ENCODE measurements at regions of chr19 and their contacts with region 1.

Region 1: DNA sequence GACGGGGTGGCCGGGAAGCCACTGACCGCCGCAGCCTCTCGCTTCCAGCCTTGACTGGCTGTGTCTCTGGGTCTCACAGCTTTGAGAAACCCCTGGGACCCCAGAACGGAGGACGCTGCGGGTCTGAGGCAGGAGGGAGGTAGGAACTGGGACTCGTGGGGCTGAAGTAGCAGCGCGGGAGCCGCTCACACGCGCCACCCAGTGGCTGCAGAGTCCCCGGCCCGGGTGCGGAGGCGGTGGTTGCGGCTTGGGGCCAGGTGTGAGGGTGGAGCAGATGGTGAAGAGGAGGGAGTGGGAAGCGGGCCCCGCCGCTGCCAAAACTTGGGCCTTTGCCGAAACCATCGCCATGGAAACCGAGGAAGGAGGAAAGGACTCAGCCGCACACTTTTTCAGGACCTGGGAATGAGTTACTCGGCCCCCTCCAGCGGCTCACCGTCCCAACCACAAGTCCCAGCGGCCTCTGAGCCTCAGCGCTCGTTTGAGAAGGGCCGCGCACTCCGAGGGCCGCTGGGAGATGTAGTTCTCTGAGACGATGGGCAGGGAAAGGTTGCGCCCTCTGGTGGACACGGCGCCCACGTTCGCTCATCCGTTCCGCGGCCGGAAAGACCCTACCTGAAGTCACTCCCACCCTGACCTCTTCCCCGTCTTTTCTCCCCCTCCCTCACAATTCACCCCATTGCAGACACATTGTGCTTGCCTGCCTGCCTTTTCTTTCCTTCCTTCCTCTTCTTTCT is 2.2 kb upstream of the SLC17A7 start:
- DNase-seq: peak; percentile 91
- H3K4me3 ChIP-seq: peak overlapping the region; percentile 62 to 66
- H3K27ac ChIP-seq: peak overlapping the region; percentile 54 to 79
- H3K4me1 ChIP-seq: peaks cover 0 to 22% of the 10 kb centered on the region in 2 experiments; a peak in 1 of 4 replicates
- H3K27me3 ChIP-seq: peaks cover 33% of the 10 kb centered on the region
- CTCF ChIP-seq: peak; percentile 91
- EP300 ChIP-seq: no peak
- RAD21 ChIP-seq: peak; percentile 66

Region 2: GRCh38 chr19:49409441-49410029 is 34.0 kb before region 1 on chr19:
- CTCF ChIA-PET with region 1: interaction called, 14 read pairs
- POLR2A ChIA-PET with region 1: no interaction called
- DNase-seq: no peak
- H3K4me3 ChIP-seq: no peak overlapping the region
- H3K27ac ChIP-seq: no peak overlapping the region
- H3K4me1 ChIP-seq: peaks cover 0 to 12% of the 10 kb centered on the region in 2 experiments; a peak in 1 of 4 replicates
- H3K27me3 ChIP-seq: no peaks in the 10 kb centered on the region
- CTCF ChIP-seq: no peak
- EP300 ChIP-seq: no peak
- RAD21 ChIP-seq: no peak

Region 3: DNA sequence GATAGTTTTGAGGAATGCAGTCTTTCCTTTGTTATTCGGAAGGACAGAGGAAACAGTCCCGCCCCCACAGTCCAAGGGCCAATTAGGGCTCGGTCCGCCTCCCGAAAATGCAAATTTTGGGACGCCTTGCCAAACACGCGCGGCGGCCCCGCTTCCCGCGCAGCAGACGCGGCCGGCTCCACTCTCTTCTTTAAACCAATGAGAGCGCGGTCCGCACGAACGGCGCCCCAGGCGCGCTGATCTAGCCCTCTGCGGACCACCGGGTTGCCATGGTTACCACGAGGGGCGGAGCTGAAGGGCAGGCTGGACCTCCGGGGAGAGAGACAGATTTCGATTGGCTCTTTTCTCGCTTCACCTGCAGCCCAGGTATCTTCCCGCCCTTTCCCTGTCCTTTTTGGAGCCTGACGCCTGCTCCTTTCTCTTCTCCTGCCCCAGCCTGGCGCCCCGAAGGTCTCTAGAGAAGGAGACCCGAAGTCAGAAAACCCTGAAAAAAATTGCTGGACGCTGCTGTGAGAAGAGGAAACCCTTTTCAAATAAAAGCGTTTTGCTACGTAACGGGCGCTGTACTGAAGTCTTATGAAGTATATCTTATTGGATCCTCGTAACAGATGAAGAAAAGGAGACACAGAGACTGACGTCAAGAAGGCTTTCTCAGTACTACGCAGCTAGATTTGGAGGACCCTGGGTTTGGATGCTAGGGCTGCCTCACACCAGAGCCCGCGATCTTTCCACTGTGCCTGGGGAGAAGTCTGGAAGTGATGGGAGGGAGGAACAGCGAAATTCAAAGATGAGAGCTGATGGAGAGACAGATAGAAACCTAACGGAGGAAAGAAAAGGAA is 22.3 kb before region 1 on chr19:
- CTCF ChIA-PET with region 1: interaction called, 11 read pairs
- POLR2A ChIA-PET with region 1: no interaction called
- DNase-seq: peak; percentile 95
- H3K4me3 ChIP-seq: peak overlapping the region in 1 of 2 experiments; percentile 14; a peak in 2 of 4 replicates
- H3K27ac ChIP-seq: no peak overlapping the region
- H3K4me1 ChIP-seq: peaks cover 0 to 4% of the 10 kb centered on the region in 2 experiments; a peak in 2 of 4 replicates
- H3K27me3 ChIP-seq: peaks cover 99% of the 10 kb centered on the region
- CTCF ChIP-seq: no peak
- EP300 ChIP-seq: no peak
- RAD21 ChIP-seq: no peak

Region 4: DNA sequence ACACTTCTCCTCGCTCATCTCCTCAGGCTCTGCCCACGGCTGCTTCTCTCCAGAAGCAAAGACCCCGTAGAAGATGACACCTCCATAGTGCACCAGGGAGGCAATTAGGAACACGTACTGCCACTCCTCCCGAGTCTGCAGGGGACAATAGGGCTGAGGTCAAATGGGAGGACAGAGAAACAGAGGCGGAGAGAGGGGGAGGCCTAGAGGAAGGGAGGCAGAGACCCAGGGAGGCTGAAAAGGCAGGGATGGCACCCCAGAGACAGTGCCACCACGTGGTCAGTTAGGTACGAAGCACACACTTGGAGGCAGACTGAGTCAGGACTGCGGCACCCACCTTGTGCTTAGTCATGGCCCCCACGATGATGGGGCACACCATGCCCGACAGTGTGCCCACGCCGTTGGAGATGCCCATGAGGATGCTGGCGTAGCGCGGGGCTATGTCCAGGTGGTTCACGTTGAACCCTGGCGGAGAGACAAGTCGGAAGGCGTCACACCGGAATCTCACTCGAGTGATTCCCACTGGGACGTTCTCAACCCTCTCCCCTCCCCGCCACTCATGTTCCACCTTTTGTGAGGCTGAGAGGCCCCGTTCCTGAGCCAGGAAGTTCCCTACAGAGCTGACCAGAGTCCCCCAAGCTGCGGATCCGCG is 12.7 kb before region 1 on chr19:
- CTCF ChIA-PET with region 1: interaction called, 15 read pairs
- POLR2A ChIA-PET with region 1: no interaction called
- DNase-seq: peak; percentile 68
- H3K4me3 ChIP-seq: no peak overlapping the region
- H3K27ac ChIP-seq: no peak overlapping the region
- H3K4me1 ChIP-seq: peaks cover 0 to 4% of the 10 kb centered on the region in 2 experiments; a peak in 1 of 4 replicates
- H3K27me3 ChIP-seq: peaks cover 96% of the 10 kb centered on the region
- CTCF ChIP-seq: peak; percentile 54
- EP300 ChIP-seq: no peak
- RAD21 ChIP-seq: peak; percentile 30; the same call in 1 of the 2 replicates

Region 5: DNA sequence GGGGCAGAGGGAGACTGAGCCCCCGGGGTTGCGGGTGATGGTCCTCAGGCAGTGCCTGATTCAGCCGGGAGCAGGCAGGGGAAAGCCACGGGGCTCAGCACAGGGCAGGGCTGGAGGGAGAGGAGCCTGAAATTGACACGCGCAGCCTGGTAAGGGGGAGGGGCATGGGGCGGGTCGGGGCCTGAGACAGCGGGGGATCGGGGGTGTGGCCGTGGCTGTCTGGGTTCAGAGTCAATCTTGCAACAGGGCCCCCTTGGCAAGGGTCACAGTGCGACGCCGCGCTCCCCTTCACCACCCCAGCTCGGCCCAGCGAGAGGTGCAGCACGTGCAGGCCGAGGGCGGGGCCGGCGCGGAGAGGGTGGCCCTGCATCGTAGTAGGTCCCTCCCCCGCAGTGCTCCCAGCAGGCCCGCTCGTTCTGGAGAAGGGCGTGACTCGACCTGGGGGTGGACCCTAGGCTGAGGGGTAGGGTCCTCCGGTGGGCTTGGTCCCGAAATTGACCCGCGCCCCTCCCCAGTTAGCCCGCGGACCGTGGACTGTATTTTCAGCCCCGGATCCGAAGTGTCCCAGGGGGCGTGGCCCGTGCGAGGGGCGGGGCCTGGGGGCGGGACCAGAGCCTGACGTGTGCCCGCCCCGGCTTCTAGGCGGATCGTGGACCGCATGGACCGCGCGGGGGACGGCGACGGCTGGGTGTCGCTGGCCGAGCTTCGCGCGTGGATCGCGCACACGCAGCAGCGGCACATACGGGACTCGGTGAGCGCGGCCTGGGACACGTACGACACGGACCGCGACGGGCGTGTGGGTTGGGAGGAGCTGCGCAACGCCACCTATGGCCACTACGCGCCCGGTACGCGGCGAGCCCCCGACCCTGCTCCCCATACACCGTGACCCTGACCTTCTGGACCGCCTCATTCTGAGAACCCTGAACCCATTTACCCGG is 90.3 kb after region 1 on chr19:
- CTCF ChIA-PET with region 1: no interaction called
- POLR2A ChIA-PET with region 1: no interaction called
- DNase-seq: peak; percentile 93
- H3K4me3 ChIP-seq: peak overlapping the region; percentile 51 to 71
- H3K27ac ChIP-seq: no peak overlapping the region
- H3K4me1 ChIP-seq: peaks cover 0 to 3% of the 10 kb centered on the region in 2 experiments; a peak in 1 of 4 replicates
- H3K27me3 ChIP-seq: no peaks in the 10 kb centered on the region
- CTCF ChIP-seq: peak; percentile 55
- EP300 ChIP-seq: no peak
- RAD21 ChIP-seq: no peak

Region 6: DNA sequence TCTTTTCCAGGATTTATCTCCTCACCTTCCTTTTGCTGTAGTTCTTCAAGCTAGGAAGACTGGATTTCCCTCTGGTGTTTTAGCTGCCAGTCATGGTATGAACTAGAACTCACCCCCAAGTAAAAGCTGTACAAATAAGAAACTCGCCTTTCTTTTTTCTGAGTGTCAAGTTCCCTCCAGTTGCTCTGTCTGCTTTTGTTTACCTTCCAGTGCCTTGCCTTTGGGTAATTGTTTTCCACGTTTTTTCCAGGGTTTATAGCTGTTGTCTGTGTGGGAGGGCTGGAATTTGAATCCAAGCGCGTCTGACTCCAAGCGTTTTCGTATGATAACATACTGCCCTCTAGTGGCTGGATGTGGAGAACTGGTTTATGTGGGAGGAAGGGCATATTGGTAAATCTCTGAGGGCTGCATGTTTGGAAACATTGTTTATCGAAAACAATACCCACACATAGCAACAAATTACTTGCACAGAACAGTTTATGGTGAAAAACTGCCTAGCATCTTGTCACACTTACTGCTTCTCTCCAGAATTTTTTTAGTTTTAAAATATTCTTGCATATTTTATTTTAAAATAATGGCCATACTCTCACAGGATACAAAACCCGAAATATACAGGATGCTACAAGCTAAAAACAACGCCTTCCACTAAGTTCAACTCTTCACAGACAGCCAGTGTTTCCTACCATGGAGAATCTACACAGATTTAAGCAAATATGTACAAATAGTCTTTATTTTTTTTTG is 103.5 kb after region 1 on chr19:
- CTCF ChIA-PET with region 1: no interaction called
- POLR2A ChIA-PET with region 1: no interaction called
- DNase-seq: peak; percentile 83
- H3K4me3 ChIP-seq: peak overlapping the region in 1 of 2 experiments; percentile 33; a peak in 1 of 4 replicates
- H3K27ac ChIP-seq: no peak overlapping the region
- H3K4me1 ChIP-seq: no peaks in the 10 kb centered on the region
- H3K27me3 ChIP-seq: no peaks in the 10 kb centered on the region
- CTCF ChIP-seq: peak; percentile 87
- EP300 ChIP-seq: no peak
- RAD21 ChIP-seq: peak; percentile 94

Measured in SK-N-SH (cell line).